Endothelial cell of umbilical vein (primary cell): ENCODE measurements at regions of chr1 and their contacts with region 1.

Region 1: DNA sequence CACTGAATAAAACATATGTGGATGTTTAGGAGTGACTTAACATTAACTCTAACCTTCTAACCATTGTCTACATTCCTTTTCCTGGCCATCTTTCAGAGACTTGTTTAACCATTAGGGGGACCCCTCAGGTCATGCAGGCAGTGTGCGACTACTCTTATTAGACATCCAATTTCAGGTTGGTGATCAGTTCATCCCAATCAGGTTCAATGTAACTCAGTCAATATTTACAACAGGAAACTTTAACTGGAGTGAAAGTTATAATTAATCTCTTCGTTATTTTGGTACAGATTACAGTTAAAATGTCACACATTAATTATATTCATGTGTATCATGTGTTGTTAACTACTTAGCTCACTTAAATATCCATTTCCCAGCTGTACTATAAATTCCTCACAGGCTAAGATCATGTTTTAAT is 68.8 kb upstream of the RGS1 start:
- DNase-seq: peak; percentile 72
- H3K4me3 ChIP-seq: no peak overlapping the region
- H3K27ac ChIP-seq: no peak overlapping the region
- H3K4me1 ChIP-seq: no peaks in the 10 kb centered on the region
- H3K27me3 ChIP-seq: no peaks in the 10 kb centered on the region
- CTCF ChIP-seq: peak; percentile 19 to 38
- POLR2A ChIP-seq: no peak

Region 2: GRCh38 chr1:192327997-192328396 is 178.8 kb before region 1 on chr1:
- CTCF ChIA-PET with region 1: no interaction called
- POLR2A ChIA-PET with region 1: no interaction called
- dilution Hi-C with region 1: no loop called
- intact Hi-C with region 1: no loop called
- DNase-seq: no peak
- H3K4me3 ChIP-seq: no peak overlapping the region
- H3K27ac ChIP-seq: no peak overlapping the region
- H3K4me1 ChIP-seq: no peaks in the 10 kb centered on the region
- H3K27me3 ChIP-seq: no peaks in the 10 kb centered on the region
- CTCF ChIP-seq: no peak
- POLR2A ChIP-seq: no peak

Region 3: DNA sequence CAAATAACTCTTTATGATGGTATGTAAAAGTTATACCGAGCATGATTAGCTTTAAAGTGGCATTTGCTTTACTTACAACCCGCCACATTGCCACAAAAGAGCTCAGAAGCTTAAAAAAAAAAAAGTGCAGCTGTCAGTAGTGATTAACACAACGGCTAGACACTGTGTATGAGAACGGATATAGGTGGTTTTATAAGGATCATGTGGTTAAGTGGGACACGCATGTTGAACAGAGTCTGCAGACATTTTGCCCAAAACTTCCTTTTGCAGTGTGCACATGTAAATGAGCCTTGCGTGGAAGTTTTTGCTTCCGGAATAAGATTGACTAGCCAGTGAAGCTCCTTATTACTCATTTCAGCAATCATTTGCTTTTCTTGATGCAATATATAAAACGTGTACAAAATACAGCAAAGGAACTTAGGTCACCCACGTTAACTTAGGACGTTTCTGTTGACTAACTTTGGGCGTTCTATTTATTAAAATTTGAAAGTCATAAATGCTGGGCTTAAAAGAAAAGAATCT is 10.1 kb after region 1 on chr1:
- CTCF ChIA-PET with region 1: interaction called, 3 read pairs
- POLR2A ChIA-PET with region 1: no interaction called
- dilution Hi-C with region 1: no loop called
- intact Hi-C with region 1: loop called (anchors 1 kb)
- DNase-seq: no peak
- H3K4me3 ChIP-seq: no peak overlapping the region
- H3K27ac ChIP-seq: no peak overlapping the region
- H3K4me1 ChIP-seq: peaks cover 20% of the 10 kb centered on the region
- H3K27me3 ChIP-seq: no peaks in the 10 kb centered on the region
- CTCF ChIP-seq: no peak
- POLR2A ChIP-seq: no peak

Region 4: GRCh38 chr1:192524223-192524622 is 17.5 kb after region 1 on chr1:
- CTCF ChIA-PET with region 1: interaction called, 3 read pairs
- POLR2A ChIA-PET with region 1: no interaction called
- dilution Hi-C with region 1: no loop called
- intact Hi-C with region 1: loop called (anchors 1 kb)
- DNase-seq: peak; percentile 67
- H3K4me3 ChIP-seq: no peak overlapping the region
- H3K27ac ChIP-seq: no peak overlapping the region
- H3K4me1 ChIP-seq: peaks cover 30% of the 10 kb centered on the region
- H3K27me3 ChIP-seq: no peaks in the 10 kb centered on the region
- CTCF ChIP-seq: no peak
- POLR2A ChIP-seq: no peak

Region 5: GRCh38 chr1:192580351-192580962 is 73.7 kb after region 1 on chr1:
- CTCF ChIA-PET with region 1: interaction called, 28 read pairs
- POLR2A ChIA-PET with region 1: no interaction called
- dilution Hi-C with region 1: no loop called
- intact Hi-C with region 1: loop called (anchors 1 kb)
- DNase-seq: peak; percentile 75
- H3K4me3 ChIP-seq: no peak overlapping the region
- H3K27ac ChIP-seq: no peak overlapping the region
- H3K4me1 ChIP-seq: no peaks in the 10 kb centered on the region
- H3K27me3 ChIP-seq: no peaks in the 10 kb centered on the region
- CTCF ChIP-seq: peak; percentile 25 to 35
- POLR2A ChIP-seq: no peak

Region 6: DNA sequence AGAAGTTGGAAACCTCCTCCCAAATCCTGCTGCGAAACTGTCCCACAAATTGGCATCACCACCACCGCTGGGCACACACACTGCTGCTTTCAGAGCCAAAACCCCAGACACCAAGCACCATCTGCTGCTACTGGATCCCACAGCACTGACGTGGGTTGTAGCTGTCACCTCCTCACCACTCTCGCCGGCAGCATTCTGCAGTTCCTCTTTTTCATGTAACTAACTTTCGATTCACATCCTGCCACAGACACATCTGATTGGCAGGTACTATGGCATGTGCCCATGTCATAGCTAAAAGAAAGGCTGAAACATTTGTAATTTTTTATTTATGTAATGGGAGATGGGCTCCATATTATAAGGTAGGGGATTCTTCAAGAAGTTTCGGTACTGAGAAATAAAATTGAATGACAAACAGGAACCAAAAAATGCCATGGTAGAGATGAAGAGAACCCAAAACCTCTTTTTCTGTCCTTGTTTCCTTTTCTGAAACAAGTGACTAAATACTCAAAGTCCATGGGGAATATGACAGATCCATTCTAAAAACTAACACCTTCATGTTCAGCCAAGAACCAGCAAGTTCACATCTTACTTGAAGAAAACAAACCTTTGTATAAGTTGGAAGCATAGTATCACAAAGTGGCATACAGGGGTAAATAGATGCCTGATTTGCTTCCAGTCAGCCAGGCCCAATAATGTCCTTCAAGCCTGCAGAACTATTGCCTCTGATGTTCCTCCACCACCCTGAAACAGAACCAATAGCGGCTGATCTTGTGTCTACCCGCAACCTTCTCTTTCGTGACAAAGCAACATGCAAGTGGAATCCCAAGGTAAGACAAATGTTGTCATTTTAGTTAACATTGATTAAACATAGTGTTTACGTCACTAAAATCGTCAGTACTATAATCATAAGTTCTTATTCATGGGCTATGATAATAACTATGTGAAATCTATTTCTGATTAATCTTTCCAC is 102.6 kb after region 1 on chr1:
- CTCF ChIA-PET with region 1: interaction called, 18 read pairs
- POLR2A ChIA-PET with region 1: no interaction called
- dilution Hi-C with region 1: no loop called
- intact Hi-C with region 1: loop called (anchors 1 kb)
- DNase-seq: no peak
- H3K4me3 ChIP-seq: no peak overlapping the region
- H3K27ac ChIP-seq: no peak overlapping the region
- H3K4me1 ChIP-seq: no peaks in the 10 kb centered on the region
- H3K27me3 ChIP-seq: no peaks in the 10 kb centered on the region
- CTCF ChIP-seq: no peak
- POLR2A ChIP-seq: no peak

Region 7: DNA sequence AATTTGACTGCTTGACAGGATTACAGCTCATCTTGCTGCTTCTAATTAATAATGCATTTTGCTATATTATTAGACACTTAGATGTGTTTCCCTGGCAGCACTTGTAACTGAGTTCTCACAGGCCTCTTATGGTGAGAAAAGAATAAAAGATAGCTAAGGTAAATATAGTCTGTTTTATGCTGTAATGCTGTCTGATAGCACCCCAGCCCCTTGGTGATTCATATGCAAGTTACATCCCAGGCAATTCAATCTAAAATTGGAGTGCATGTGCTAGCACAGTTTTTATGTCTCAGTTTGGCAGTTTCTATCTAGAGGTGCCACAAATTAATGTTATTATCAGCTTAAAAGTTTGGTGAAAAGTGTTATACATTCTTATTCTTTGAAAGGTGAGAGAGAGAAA is 171.4 kb after region 1 on chr1:
- CTCF ChIA-PET with region 1: no interaction called
- POLR2A ChIA-PET with region 1: no interaction called
- dilution Hi-C with region 1: no loop called
- intact Hi-C with region 1: no loop called
- DNase-seq: no peak
- H3K4me3 ChIP-seq: no peak overlapping the region
- H3K27ac ChIP-seq: no peak overlapping the region
- H3K4me1 ChIP-seq: peaks cover 16% of the 10 kb centered on the region
- H3K27me3 ChIP-seq: no peaks in the 10 kb centered on the region
- CTCF ChIP-seq: no peak
- POLR2A ChIP-seq: no peak